Head of caudate nucleus (tissue), 42 donors: ENCODE measurements at regions of chr4 and their contacts with region 1.

Region 1: DNA sequence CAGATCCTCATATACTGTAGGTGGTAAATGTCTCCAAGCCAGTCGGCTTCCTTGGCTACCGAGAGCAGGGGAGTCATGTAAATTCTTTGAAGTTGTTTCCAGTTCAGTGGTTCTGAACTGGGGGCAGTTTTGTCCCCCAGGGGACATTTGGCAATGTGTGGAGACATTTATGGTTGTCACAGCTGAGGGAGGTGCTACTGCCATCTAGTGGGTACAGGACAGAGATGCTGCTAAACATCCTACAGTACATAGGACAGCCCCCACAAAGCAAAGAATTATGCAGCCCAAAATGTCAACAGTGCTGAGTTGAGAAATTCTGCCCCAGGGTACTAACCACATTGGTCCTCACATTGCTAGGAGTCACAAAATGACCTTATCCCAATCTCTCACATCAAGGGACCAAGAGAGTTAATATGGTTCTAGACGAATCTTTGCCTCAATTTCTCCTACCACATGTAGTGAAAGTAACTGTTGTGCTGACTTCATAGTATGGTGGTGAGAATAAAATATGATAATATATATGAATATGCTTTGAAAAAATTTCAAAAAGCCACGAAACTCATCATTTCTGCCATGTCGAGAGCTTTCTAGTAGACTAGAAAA is 104.4 kb upstream of the ARHGAP24 start:
- DNase-seq: peak in 36 of 42 donors; percentile 5 to 74 (median 38)

Region 2: DNA sequence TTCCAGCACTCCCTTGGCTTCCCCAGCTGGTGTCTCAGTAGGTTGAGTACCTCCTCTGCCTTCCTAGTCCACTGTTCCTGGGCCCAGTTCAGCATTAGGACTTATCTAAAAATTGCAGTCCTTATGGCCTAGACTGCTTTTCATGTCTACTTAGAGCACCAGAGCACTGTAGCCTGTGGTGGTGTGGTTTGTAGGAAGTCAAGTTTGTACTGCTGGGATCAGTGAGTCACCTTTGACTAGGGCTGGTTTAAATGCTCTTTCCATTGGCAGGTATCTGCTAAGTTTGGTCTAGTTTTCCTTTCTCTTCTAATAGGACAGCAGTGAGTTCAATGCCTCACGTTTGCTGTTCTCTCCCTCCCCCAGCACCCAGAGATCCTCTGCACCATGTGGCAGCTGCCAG is 170.4 kb before region 1 on chr4:
- intact Hi-C with region 1: no loop called
- DNase-seq: no peak

Region 3: GRCh38 chr4:85260064-85260463 is 110.5 kb before region 1 on chr4:
- intact Hi-C with region 1: no loop called
- DNase-seq: no peak

Region 4: GRCh38 chr4:85747882-85748491 is 377.5 kb after region 1 on chr4:
- intact Hi-C with region 1: loop called (anchors 10 kb)
- DNase-seq: peak in 25 of 42 donors; percentile 21 to 81 (median 54)